ENCODE measurements at regions of chr3 and their contacts with region 1.

Region 1: DNA sequence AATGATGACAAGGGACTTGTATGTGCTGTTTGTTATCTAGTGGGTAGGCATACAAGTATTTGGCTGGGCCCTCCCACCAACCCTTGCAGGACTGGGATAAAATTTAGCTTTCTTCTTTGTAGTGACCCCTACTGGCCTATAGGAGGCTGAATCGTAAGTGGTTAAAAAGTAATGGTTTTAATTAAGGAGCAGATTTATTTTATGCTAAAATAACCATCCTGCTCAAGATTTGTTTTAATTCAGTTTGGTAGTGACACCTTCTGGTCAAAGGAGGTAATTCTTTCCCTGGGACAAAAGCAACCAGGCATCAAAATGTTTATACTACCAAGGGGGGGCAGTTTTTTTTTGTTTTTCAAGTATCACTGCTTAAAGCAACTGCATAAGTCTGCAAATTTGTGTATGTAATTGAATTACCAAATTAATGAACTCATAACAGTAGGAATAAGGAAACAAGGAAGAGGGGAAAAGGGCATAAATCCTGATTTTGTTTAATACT is 70.7 kb downstream of the TOP2B start:
- DNase-seq: no peak
- ATAC-seq: peak; percentile 72

Region 2: DNA sequence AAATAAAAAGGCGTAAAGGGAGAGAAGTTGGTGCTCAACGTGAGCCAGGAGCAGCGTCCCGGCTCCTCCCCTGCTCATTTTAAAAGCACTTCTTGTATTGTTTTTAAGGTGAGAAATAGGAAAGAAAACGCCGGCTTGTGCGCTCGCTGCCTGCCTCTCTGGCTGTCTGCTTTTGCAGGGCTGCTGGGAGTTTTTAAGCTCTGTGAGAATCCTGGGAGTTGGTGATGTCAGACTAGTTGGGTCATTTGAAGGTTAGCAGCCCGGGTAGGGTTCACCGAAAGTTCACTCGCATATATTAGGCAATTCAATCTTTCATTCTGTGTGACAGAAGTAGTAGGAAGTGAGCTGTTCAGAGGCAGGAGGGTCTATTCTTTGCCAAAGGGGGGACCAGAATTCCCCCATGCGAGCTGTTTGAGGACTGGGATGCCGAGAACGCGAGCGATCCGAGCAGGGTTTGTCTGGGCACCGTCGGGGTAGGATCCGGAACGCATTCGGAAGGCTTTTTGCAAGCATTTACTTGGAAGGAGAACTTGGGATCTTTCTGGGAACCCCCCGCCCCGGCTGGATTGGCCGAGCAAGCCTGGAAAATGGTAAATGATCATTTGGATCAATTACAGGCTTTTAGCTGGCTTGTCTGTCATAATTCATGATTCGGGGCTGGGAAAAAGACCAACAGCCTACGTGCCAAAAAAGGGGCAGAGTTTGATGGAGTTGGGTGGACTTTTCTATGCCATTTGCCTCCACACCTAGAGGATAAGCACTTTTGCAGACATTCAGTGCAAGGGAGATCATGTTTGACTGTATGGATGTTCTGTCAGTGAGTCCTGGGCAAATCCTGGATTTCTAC is 165.9 kb before region 1 on chr3 and contains the start of gene RARB:
- intact Hi-C with region 1: loop called (anchors 10 kb)
- DNase-seq: peak; percentile 85
- ATAC-seq: peak; percentile 95
- total RNA-seq, gene RARB: 15.2 TPM

Region 3: GRCh38 chr3:25441234-25441856 is 152.7 kb before region 1 on chr3:
- intact Hi-C with region 1: no loop called
- DNase-seq: no peak
- ATAC-seq: no peak

Region 4: DNA sequence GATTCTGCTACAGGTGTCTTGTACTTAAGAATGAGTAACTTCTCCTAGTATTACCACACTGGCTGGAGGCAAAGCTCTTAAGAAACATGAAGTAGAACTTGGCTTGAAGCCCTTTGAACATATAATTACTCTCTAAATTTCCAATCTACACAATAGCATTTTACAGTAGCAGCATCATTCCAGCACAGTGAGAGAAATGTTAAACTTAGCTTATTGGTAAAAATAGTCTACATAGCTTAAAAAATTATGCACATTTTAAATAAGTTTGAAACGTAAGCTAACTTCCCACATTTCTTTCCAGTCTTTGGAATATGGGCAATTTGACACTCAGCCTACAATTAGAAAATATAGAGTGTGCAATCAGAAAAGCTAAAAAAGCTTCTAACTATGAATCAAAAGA is 103.5 kb after region 1 on chr3:
- intact Hi-C with region 1: no loop called
- DNase-seq: no peak
- ATAC-seq: no peak

Region 5: GRCh38 chr3:25713335-25713985 is 119.4 kb after region 1 on chr3:
- intact Hi-C with region 1: no loop called
- DNase-seq: no peak
- ATAC-seq: no peak

Measured in sciatic nerve (tissue), 2 donors.